ENCODE measurements at regions of chr3 and their contacts with region 1.

Region 1: DNA sequence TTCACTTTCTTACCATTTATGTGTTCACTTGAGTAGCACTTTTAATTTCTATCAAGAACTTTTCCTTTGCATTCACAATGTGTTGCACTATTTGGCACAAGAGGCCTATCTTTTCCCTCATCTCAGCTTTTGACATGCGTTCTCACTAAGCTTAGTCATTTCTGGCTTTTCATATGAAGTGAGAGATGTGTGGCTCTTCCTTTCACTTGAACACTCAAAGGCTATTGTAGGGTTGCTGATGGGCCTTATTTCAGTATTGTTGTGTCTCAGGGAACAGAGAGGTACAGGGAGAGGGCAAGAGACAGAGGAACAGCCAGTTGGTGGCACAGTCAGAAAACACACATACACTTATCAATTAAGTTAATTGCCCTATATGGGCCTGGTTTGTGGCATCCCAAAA is 127.4 kb upstream of the MLF1 start:
- DNase-seq: peak; percentile 56
- H3K4me3 Mint-ChIP-seq: no peak overlapping the region
- H3K27ac Mint-ChIP-seq: peak overlapping the region; percentile 71
- H3K4me1 Mint-ChIP-seq: peaks cover 10% of the 10 kb centered on the region
- H3K27me3 Mint-ChIP-seq: no peaks in the 10 kb centered on the region

Region 2: DNA sequence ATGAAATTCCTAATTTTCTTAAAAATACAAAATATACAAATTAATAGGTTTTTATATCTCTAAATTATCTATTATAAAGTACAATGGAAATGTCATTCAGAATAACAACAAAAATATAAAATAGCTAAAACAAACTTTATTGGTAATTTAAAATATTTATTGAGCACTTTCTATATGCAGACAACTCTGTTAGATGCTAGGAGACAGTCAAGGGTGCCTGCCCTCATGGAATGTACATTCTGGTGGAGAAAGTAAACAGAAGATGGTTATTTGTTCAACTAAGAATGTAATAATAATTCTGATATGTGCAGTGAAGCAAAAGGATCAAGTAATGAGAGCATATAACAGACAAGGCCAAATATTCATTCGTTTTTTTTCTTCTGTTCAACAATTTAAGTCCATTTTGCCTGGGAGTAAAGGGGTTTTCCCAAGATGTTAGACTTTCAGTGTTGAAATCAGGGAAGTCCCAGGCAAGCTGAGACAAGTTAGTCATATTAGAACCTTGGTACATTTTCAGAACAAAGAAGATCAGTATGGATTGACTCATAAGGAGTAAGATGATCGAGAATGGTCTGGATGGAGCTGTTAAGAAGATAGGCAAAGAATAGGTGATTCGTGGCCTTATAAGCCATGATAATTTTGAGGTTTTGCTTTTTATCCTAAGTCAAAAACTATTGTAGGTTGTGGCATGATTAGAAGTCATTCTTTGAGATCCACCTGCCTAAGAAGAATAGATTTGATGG is 22.8 kb before region 1 on chr3:
- intact Hi-C with region 1: loop called (anchors 2 kb)
- DNase-seq: no peak
- H3K4me3 Mint-ChIP-seq: no peak overlapping the region
- H3K27ac Mint-ChIP-seq: peak overlapping the region; percentile 0
- H3K4me1 Mint-ChIP-seq: peaks cover 8% of the 10 kb centered on the region
- H3K27me3 Mint-ChIP-seq: no peaks in the 10 kb centered on the region

Region 3: DNA sequence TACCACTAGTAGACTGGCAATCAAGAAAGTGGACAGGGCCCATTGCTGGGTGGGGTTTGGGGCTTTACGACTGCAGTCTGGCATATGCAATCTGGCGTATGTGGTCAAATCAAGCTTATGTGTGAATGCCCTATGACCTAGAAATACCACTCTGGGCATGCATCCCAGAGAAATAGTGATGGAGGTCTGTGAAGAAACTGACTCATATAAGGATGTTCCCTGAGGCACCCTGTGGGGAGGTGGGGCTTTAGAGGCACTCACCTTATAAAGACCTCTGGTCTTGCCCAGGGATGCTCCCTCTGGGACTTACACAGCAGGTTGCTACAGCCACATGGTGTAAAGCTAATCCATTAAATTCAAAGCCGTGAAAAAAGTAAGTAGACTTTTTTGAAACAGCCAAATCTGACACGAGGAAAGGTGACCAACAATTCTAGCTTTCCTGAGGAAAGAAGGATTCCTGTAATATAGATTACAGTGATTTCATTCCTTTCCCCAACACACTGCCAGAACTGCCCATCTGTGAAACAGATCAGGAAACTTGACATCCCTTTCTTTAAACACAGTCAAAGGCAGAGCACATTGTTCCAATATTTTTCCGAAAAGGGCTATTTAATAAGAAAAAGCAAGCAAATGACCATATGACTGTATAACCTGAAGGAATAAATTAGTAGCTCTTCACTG is 275.0 kb after region 1 on chr3:
- intact Hi-C with region 1: no loop called
- DNase-seq: no peak
- H3K4me3 Mint-ChIP-seq: no peak overlapping the region
- H3K27ac Mint-ChIP-seq: no peak overlapping the region
- H3K4me1 Mint-ChIP-seq: peaks cover 23% of the 10 kb centered on the region
- H3K27me3 Mint-ChIP-seq: no peaks in the 10 kb centered on the region

Measured in activated CD4-positive, alpha-beta T cell treated with anti-CD3 and anti-CD28 coated beads, Interleukin-2, amount 10 ng/mL, durations not matched to agents 24 days and 14 days (primary cell).